ENCODE measurements at regions of chr21 and their contacts with region 1.

Region 1: DNA sequence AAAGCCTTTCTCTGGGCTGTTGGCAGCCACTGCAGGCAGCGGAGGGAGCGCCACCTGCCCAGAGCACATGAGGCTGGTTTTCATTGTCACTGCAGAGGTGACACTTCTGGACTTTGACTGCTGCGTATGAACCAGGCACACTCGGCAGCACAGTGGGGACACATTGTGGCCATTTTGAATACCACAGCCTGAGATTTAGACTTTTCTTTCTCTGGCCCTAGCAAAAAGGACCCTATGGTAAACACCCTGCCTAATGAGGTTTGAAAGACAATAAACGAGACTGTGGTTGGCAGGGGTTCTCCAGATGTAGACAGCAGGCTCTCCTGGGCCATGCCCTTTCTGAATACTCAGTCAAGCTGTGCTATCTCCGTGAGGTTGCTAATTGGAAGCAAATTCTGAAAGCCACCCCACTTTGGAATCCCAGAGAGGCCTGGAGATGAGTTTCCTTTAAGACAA is 12.0 kb upstream of the KCNE2 start:
- DNase-seq: no peak
- ATAC-seq: peak; percentile 83

Region 2: GRCh38 chr21:33924079-33924765 is 427.6 kb before region 1 on chr21:
- intact Hi-C with region 1: loop called (anchors 2 kb)
- DNase-seq: peak; percentile 97
- ATAC-seq: peak; percentile 97

Region 3: GRCh38 chr21:35995522-35996088 is 1643.8 kb after region 1 on chr21:
- intact Hi-C with region 1: no loop called
- DNase-seq: no peak
- ATAC-seq: no peak